ENCODE measurements at regions of chr11 and their contacts with region 1.

Region 1: GRCh38 chr11:31870609-31871309 is 59.6 kb upstream of the PAX6 start:
- DNase-seq: peak in 6 of 14 experiments; percentile 1 to 32 (median 17)
- ATAC-seq: no peak
- H3K4me3 ChIP-seq: no peak overlapping the region
- H3K4me3 Mint-ChIP-seq: no peak overlapping the region
- H3K27ac ChIP-seq: no peak overlapping the region
- H3K27ac Mint-ChIP-seq: no peak overlapping the region
- H3K4me1 ChIP-seq: no peaks in the 10 kb centered on the region
- H3K4me1 Mint-ChIP-seq: no peaks in the 10 kb centered on the region
- H3K27me3 ChIP-seq: peaks cover 2 to 15% of the 10 kb centered on the region in 2 experiments
- H3K27me3 Mint-ChIP-seq: peaks cover 56% of the 10 kb centered on the region
- CTCF ChIP-seq: no peak

Region 2: GRCh38 chr11:31107062-31107461 is 763.7 kb before region 1 on chr11:
- CTCF ChIA-PET with region 1: no interaction called
- POLR2A ChIA-PET with region 1: no interaction called
- intact Hi-C with region 1: loop called (anchors 5 kb)
- DNase-seq: peak; percentile 1 to 53 (median 16)
- ATAC-seq: no peak
- H3K4me3 ChIP-seq: no peak overlapping the region
- H3K4me3 Mint-ChIP-seq: no peak overlapping the region
- H3K27ac ChIP-seq: no peak overlapping the region
- H3K27ac Mint-ChIP-seq: no peak overlapping the region
- H3K4me1 ChIP-seq: no peaks in the 10 kb centered on the region
- H3K4me1 Mint-ChIP-seq: no peaks in the 10 kb centered on the region
- H3K27me3 ChIP-seq: no peaks in the 10 kb centered on the region
- H3K27me3 Mint-ChIP-seq: no peaks in the 10 kb centered on the region
- CTCF ChIP-seq: no peak

Region 3: GRCh38 chr11:31240338-31240904 is 630.3 kb before region 1 on chr11:
- CTCF ChIA-PET with region 1: interaction called, 3 read pairs
- POLR2A ChIA-PET with region 1: no interaction called
- intact Hi-C with region 1: loop called (anchors 2 to 5 kb)
- DNase-seq: peak in 7 of 14 experiments; percentile 0 to 59 (median 27)
- ATAC-seq: no peak
- H3K4me3 ChIP-seq: no peak overlapping the region
- H3K4me3 Mint-ChIP-seq: no peak overlapping the region
- H3K27ac ChIP-seq: no peak overlapping the region
- H3K27ac Mint-ChIP-seq: no peak overlapping the region
- H3K4me1 ChIP-seq: no peaks in the 10 kb centered on the region
- H3K4me1 Mint-ChIP-seq: no peaks in the 10 kb centered on the region
- H3K27me3 ChIP-seq: no peaks in the 10 kb centered on the region
- H3K27me3 Mint-ChIP-seq: peaks cover 5% of the 10 kb centered on the region
- CTCF ChIP-seq: peak; percentile 64

Region 4: GRCh38 chr11:31397239-31397834 is 473.4 kb before region 1 on chr11:
- CTCF ChIA-PET with region 1: no interaction called
- POLR2A ChIA-PET with region 1: no interaction called
- intact Hi-C with region 1: loop called (anchors 2 to 10 kb)
- DNase-seq: peak in 3 of 14 experiments; percentile 33 to 45 (median 38)
- ATAC-seq: no peak
- H3K4me3 ChIP-seq: no peak overlapping the region
- H3K4me3 Mint-ChIP-seq: no peak overlapping the region
- H3K27ac ChIP-seq: no peak overlapping the region
- H3K27ac Mint-ChIP-seq: no peak overlapping the region
- H3K4me1 ChIP-seq: no peaks in the 10 kb centered on the region
- H3K4me1 Mint-ChIP-seq: no peaks in the 10 kb centered on the region
- H3K27me3 ChIP-seq: no peaks in the 10 kb centered on the region
- H3K27me3 Mint-ChIP-seq: no peaks in the 10 kb centered on the region
- CTCF ChIP-seq: peak; percentile 60

Region 5: GRCh38 chr11:31487848-31488247 is 382.9 kb before region 1 on chr11:
- CTCF ChIA-PET with region 1: no interaction called
- POLR2A ChIA-PET with region 1: no interaction called
- intact Hi-C with region 1: loop called (anchors 5 to 10 kb)
- DNase-seq: peak in 4 of 14 experiments; percentile 8 to 51 (median 36)
- ATAC-seq: no peak
- H3K4me3 ChIP-seq: no peak overlapping the region
- H3K4me3 Mint-ChIP-seq: no peak overlapping the region
- H3K27ac ChIP-seq: no peak overlapping the region
- H3K27ac Mint-ChIP-seq: no peak overlapping the region
- H3K4me1 ChIP-seq: no peaks in the 10 kb centered on the region
- H3K4me1 Mint-ChIP-seq: peaks cover 26% of the 10 kb centered on the region
- H3K27me3 ChIP-seq: no peaks in the 10 kb centered on the region
- H3K27me3 Mint-ChIP-seq: no peaks in the 10 kb centered on the region
- CTCF ChIP-seq: peak; percentile 25

Region 6: DNA sequence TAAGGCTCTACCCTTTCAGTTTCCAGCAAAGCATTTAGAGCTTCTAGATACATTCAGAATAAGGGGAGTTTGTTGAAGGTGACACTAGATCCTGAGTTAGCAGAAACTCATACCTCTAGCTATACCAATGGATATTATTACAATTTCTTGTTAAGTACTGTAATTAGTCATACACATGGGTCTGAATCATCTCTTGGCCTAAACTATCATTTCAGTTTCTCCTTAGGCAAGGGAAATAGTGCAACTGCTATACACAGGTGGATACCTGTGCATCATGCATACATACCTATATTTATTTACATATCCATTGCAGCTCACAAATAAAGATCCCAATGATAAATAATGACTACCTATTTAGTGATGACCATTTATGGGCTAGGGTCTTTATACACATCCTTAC is 14.5 kb before region 1 on chr11:
- CTCF ChIA-PET with region 1: no interaction called
- POLR2A ChIA-PET with region 1: no interaction called
- intact Hi-C with region 1: no loop called
- DNase-seq: no peak
- ATAC-seq: no peak
- H3K4me3 ChIP-seq: no peak overlapping the region
- H3K4me3 Mint-ChIP-seq: no peak overlapping the region
- H3K27ac ChIP-seq: no peak overlapping the region
- H3K27ac Mint-ChIP-seq: no peak overlapping the region
- H3K4me1 ChIP-seq: no peaks in the 10 kb centered on the region
- H3K4me1 Mint-ChIP-seq: no peaks in the 10 kb centered on the region
- H3K27me3 ChIP-seq: peaks cover 0 to 5% of the 10 kb centered on the region in 2 experiments
- H3K27me3 Mint-ChIP-seq: peaks cover 59% of the 10 kb centered on the region
- CTCF ChIP-seq: no peak